Activated CD8-positive, alpha-beta memory T cell treated with anti-CD3 and anti-CD28 coated beads, Interleukin-2, amount 10 ng/mL, durations not matched to agents 7 days and 5 days (primary cell): ENCODE measurements at regions of chr16 and their contacts with region 1.

Region 1: DNA sequence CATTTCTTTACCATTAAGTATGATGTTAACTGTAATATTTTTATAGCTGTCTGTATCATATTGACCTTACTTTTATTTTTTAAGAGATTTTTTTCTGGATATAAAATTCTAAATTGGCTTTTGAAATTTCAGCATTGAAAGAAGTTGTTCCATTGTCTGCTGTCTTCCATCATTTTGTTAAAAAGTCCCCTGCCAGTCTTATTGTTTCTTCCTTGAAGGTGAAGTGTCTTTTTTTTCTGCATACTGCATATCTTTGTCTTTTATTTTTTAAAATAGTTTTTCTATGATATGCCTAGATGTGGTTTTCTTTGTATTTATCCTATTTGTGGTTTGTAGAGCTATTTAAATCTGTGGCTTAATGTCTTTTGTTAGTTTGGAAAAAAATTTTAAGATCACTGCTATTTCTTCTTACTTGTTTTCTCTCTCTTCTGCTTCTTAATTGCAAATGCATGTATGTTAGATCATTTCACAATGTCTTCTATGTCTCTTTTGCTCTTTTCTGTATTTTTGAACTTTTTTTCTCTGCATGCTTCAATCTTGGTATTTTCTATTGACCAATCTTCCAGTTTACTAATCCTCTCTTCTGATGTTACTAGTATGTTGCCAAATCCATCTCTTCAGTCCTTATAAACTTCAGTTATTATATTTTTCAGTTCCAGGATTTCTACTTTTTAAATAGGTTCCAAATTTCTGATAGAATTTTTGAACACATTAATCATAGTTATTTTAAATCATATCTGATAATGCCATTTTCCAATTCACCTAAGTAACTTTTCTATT is 20.2 kb downstream of the IL21R start:
- DNase-seq: no peak
- ATAC-seq: no peak
- H3K4me3 Mint-ChIP-seq: no peak overlapping the region
- H3K27ac Mint-ChIP-seq: peak overlapping the region; percentile 63
- H3K4me1 Mint-ChIP-seq: peaks cover 47% of the 10 kb centered on the region
- H3K27me3 Mint-ChIP-seq: no peaks in the 10 kb centered on the region

Region 2: GRCh38 chr16:27408012-27408601 is 14.0 kb before region 1 on chr16:
- CTCF ChIA-PET with region 1: interaction called, 20 read pairs
- DNase-seq: peak; percentile 65
- ATAC-seq: peak; percentile 55
- H3K4me3 Mint-ChIP-seq: peak overlapping the region; percentile 67
- H3K27ac Mint-ChIP-seq: peak overlapping the region; percentile 89
- H3K4me1 Mint-ChIP-seq: peaks cover 78% of the 10 kb centered on the region
- H3K27me3 Mint-ChIP-seq: no peaks in the 10 kb centered on the region